Posterior vena cava (tissue), 2 donors: ENCODE measurements at regions of chr12 and their contacts with region 1.

Region 1: DNA sequence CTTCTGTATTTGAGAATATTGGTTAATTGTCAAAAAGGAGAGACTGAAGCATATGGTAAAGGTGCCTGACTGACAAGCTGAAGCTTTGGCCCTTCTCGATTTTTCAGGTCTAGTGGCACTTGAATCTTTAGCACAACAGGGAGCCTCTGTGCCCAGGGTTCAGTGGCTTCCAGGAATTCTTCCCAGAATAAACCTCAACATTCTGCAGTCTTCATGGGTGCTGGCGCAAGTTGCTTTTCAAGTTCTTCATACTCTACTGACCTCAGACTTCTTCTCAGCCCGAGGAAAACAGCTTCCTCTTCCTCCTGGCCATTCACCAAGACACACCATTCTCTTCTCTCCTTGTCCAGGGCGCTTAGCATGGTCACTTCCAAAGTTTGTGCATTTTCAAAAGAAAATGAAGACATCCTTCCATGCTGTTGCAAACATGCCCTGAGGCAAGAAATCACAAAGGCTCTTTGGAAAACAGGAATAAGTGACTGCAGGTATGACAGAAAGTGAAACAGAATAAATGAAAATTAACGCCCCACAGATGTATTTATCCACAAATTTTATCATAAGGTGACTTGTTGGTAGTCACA is 89.9 kb downstream of the MGST1 start:
- DNase-seq: no peak

Region 2: GRCh38 chr12:16492240-16492639 is 54.9 kb after region 1 on chr12:
- intact Hi-C with region 1: loop called in 1 of 2 experiments (anchors 2 kb)
- DNase-seq: no peak